Activated B cell treated with CpG ODN at 0.5 μM for 24 hours (primary cell): ENCODE measurements at regions of chr2 and their contacts with region 1.

Region 1: DNA sequence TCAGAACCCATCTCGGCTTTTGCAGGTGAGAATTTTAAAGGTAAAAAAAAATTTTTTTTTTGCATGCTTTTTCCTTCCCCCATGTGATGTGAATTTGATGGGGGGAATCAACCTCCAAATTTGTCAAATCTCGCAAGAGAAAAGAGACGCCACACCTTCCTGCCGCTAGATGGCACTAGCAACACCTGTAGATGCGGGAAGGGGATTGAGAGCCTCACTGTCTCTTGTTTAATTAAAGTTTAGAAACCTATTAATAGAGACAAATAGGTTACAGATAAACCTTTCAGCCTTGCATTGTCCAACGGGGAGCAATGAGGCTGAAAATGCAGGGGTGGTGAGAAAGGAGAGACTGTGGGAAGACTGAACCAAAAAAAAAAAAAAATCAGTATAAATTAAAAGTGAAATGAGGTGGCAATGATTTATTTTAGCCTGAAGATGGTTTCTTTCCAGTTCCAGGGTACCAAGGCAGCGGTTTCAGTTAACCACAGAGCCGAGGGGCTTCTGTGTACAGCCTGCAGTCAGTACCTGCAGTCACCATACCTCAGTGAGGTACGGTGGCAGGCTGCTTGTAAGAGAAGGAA is 84.6 kb downstream of the NRP2 start:
- DNase-seq: no peak
- ATAC-seq: no peak
- H3K4me3 Mint-ChIP-seq: no peak overlapping the region
- H3K27ac Mint-ChIP-seq: no peak overlapping the region
- H3K4me1 Mint-ChIP-seq: peaks cover 4% of the 10 kb centered on the region
- H3K27me3 Mint-ChIP-seq: peaks cover 20% of the 10 kb centered on the region
- CTCF ChIP-seq: peak; percentile 62

Region 2: GRCh38 chr2:204325468-204325867 is 1441.4 kb before region 1 on chr2:
- CTCF ChIA-PET with region 1: interaction called, 3 read pairs
- POLR2A ChIA-PET with region 1: no interaction called
- intact Hi-C with region 1: loop called (anchors 5 kb)
- DNase-seq: no peak
- ATAC-seq: peak; percentile 45
- H3K4me3 Mint-ChIP-seq: no peak overlapping the region
- H3K27ac Mint-ChIP-seq: no peak overlapping the region
- H3K4me1 Mint-ChIP-seq: peaks cover 2% of the 10 kb centered on the region
- H3K27me3 Mint-ChIP-seq: peaks cover 2% of the 10 kb centered on the region
- CTCF ChIP-seq: no peak

Region 3: DNA sequence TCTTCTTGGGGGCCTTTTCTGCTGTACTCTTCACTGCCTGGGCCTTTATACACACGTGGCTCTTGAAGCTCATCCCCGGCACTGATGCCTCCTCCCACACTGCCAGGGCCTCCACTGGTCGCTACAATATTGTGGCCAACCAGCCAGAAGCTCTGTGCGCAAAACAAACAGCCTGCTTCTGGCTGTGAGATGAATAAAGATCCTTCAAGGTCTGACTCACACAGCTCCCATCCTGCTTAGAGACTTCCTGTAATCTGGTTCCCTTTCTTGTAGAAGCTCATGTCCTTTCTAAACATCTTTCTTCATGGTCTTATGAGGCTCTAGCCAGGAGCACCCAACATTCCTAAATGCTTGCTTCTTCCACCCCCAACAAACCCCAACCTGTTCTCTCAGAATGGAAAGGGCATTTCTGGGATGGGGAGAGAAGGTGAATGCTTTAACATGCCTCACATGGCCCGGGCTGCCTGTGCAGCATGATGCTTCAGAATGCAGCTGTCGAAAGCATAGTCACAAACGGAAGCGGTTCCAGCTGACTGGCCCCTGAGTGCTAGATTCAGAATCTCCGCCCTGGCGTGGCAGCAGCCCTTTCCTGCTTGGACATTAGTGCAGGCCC is 60.0 kb before region 1 on chr2:
- CTCF ChIA-PET with region 1: no interaction called
- POLR2A ChIA-PET with region 1: no interaction called
- intact Hi-C with region 1: loop called (anchors 1 kb)
- DNase-seq: peak; percentile 60
- ATAC-seq: peak; percentile 95
- H3K4me3 Mint-ChIP-seq: peak overlapping the region; percentile 65
- H3K27ac Mint-ChIP-seq: peak overlapping the region; percentile 99
- H3K4me1 Mint-ChIP-seq: peaks cover 63% of the 10 kb centered on the region
- H3K27me3 Mint-ChIP-seq: no peaks in the 10 kb centered on the region
- CTCF ChIP-seq: no peak

Region 4: DNA sequence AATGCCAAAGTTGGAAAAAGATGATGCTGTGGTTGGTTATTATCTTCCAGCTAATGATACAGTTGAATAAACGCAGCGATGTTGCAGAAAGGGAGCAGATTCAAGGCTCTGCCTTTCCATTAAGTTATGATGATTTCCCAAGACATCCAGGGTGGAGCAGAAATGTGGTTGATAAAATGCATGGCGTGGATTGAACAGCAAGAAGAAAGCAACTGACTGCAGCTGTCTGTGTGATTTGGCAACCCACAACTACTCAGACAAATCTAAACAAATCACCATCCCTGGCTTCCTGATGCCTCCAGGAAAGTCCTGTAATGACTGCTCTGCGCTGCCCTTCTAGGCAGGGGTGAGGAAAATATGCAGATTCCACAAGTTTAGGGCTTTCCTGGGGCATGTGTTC is 81.7 kb after region 1 on chr2:
- CTCF ChIA-PET with region 1: no interaction called
- POLR2A ChIA-PET with region 1: no interaction called
- intact Hi-C with region 1: no loop called
- DNase-seq: no peak
- ATAC-seq: no peak
- H3K4me3 Mint-ChIP-seq: no peak overlapping the region
- H3K27ac Mint-ChIP-seq: no peak overlapping the region
- H3K4me1 Mint-ChIP-seq: no peaks in the 10 kb centered on the region
- H3K27me3 Mint-ChIP-seq: no peaks in the 10 kb centered on the region
- CTCF ChIP-seq: no peak

Region 5: DNA sequence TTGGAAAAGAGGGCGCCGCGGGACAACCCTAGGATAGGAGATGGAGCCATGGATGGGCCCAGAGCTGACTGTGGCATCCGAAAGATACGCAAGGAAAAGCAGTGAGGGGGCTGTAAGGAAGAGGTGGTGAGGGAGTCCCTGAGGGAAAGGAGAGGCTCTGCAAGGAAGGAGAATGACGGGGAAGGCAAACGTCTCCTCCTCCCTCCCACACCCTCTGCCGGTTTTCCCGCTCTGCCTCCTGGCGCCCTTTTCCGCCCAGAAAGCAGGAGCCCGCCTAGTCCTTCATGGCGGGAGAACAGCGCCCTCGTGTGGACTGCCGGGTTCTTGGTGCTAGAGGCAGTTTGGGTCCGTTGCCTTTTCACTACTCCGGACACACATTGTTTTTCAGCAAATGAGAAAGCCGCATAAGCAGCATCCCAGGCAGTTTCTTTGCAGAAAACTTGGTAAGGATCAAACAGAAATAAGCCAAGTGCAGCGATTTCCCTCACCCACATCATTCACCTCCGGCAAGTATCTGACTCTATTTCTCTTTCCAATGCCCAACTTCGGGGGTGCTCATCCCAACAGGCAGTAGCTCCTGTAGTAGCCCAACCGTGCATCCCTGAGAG is 118.7 kb after region 1 on chr2:
- CTCF ChIA-PET with region 1: no interaction called
- POLR2A ChIA-PET with region 1: no interaction called
- intact Hi-C with region 1: loop called (anchors 5 kb)
- DNase-seq: peak; percentile 36
- ATAC-seq: no peak
- H3K4me3 Mint-ChIP-seq: no peak overlapping the region
- H3K27ac Mint-ChIP-seq: no peak overlapping the region
- H3K4me1 Mint-ChIP-seq: no peaks in the 10 kb centered on the region
- H3K27me3 Mint-ChIP-seq: peaks cover 20% of the 10 kb centered on the region
- CTCF ChIP-seq: no peak

Region 6: DNA sequence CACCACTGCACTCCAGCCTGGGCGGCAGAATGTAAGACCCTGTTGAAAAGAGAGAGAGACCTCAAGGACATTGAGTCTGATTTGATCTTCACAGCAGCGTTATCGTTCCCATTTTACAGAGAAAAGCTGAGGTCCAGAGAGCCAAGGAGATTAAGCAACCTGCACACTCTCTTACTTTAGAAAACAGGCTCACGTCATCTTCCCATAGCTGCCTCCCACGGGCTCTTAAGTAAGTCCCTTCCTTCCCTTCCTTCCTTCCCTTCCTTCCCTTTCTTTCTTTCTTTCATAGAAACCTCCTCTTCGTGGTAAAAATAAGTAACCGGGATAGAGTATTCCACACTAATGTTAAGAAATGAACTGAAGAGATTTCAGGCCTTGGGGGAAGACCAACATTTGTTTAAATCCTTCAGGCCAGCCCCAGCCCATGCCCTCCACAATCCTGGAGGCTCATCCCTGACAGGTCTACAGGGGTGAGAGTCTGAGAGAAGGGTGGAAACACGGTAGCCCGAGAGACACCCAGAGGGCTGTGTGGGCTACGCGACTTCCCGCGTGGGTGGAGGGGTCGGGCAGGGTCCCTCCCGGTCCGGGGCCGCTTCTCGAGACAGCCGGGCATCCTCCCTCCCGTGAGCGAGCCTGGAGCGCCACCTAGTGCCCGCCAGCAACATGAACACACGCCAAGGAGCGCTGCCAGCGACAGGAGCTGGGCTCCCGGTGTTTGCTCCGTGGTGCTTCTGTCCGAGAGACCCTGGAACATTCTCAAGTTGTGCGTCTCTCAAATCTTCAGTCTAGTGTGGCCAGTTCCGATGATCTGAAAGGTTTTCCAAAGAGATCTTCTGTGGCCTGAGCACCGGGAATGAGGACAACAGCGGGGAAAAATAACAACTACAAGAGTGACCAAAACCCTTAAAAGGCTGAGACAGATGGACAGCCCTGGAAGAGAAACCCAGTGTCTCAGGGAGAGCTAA is 158.8 kb after region 1 on chr2:
- CTCF ChIA-PET with region 1: no interaction called
- POLR2A ChIA-PET with region 1: no interaction called
- intact Hi-C with region 1: loop called (anchors 1 kb)
- DNase-seq: peak; percentile 49
- ATAC-seq: peak; percentile 57
- H3K4me3 Mint-ChIP-seq: no peak overlapping the region
- H3K27ac Mint-ChIP-seq: no peak overlapping the region
- H3K4me1 Mint-ChIP-seq: peaks cover 7% of the 10 kb centered on the region
- H3K27me3 Mint-ChIP-seq: peaks cover 38% of the 10 kb centered on the region
- CTCF ChIP-seq: no peak

Region 7: DNA sequence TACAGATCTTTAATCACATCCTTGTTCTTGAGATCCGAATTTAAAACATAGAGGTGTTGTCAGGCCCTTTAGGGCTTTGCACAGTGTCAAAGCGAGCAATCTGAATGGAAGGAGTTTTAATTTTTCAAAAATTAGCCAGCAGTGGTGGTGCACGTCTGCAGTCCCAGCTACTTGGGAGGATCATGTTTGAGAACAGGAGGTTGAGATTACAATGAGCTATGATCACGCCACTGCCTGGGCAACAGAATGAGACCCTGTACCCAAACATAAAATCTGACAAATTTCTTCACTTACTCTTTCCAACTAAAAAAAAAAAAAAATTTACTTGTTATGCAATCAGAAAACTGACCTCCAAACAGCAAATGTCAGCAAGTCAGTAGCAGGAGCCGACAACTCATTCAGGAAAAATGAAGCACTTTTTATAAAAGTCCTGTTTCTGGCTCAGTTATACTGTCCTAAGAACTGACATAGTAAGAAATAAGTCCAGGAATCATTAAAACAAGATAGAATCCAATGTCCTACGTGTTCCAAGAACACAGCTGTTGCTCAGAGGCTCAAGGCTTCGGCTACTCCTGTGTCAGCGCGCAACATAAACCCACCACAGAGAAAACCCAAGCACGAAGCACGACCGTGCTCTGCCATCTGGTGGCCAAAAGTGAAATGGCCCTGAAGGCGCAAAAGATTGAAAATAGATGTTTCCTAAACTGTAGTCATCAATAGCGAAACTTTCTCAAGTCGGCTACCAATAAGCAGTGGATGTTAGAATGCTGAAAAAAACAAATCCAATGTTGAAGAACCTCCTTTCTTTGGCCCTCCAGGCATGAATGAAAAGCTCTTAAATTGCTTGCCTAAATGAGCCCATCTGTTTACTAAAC is 181.0 kb after region 1 on chr2:
- CTCF ChIA-PET with region 1: no interaction called
- POLR2A ChIA-PET with region 1: no interaction called
- intact Hi-C with region 1: loop called (anchors 1 kb)
- DNase-seq: peak; percentile 28
- ATAC-seq: peak; percentile 64
- H3K4me3 Mint-ChIP-seq: no peak overlapping the region
- H3K27ac Mint-ChIP-seq: no peak overlapping the region
- H3K4me1 Mint-ChIP-seq: peaks cover 2% of the 10 kb centered on the region
- H3K27me3 Mint-ChIP-seq: peaks cover 19% of the 10 kb centered on the region
- CTCF ChIP-seq: peak; percentile 89